Psoas muscle (tissue), 8 donors: ENCODE measurements at regions of chr6 and their contacts with region 1.

Region 1: GRCh38 chr6:7245668-7246393 is 67.2 kb downstream of the SSR1 start:
- DNase-seq: no peak
- ATAC-seq: no peak
- H3K4me3 ChIP-seq: no peak overlapping the region
- H3K27ac ChIP-seq: no peak overlapping the region
- H3K4me1 ChIP-seq: peaks cover 16% of the 10 kb centered on the region
- H3K27me3 ChIP-seq: no peaks in the 10 kb centered on the region
- CTCF ChIP-seq: no peak

Region 2: GRCh38 chr6:6724539-6725467 is 521.0 kb before region 1 on chr6:
- intact Hi-C with region 1: loop called (anchors 2 to 5 kb)
- DNase-seq: peak; percentile 70 to 84
- ATAC-seq: peak; percentile 91 to 96 (median 92)
- H3K4me3 ChIP-seq: peak overlapping the region; percentile 62
- H3K27ac ChIP-seq: peak overlapping the region; percentile 88
- H3K4me1 ChIP-seq: peaks cover 15% of the 10 kb centered on the region
- H3K27me3 ChIP-seq: no peaks in the 10 kb centered on the region
- CTCF ChIP-seq: peak; percentile 73

Region 3: GRCh38 chr6:7137335-7138045 is 108.3 kb before region 1 on chr6:
- intact Hi-C with region 1: no loop called
- DNase-seq: peak; percentile 59 to 76
- ATAC-seq: peak; percentile 39 to 55 (median 48)
- H3K4me3 ChIP-seq: peak overlapping the region; percentile 50
- H3K27ac ChIP-seq: peak overlapping the region; percentile 99
- H3K4me1 ChIP-seq: peaks cover 86% of the 10 kb centered on the region
- H3K27me3 ChIP-seq: no peaks in the 10 kb centered on the region
- CTCF ChIP-seq: no peak

Region 4: DNA sequence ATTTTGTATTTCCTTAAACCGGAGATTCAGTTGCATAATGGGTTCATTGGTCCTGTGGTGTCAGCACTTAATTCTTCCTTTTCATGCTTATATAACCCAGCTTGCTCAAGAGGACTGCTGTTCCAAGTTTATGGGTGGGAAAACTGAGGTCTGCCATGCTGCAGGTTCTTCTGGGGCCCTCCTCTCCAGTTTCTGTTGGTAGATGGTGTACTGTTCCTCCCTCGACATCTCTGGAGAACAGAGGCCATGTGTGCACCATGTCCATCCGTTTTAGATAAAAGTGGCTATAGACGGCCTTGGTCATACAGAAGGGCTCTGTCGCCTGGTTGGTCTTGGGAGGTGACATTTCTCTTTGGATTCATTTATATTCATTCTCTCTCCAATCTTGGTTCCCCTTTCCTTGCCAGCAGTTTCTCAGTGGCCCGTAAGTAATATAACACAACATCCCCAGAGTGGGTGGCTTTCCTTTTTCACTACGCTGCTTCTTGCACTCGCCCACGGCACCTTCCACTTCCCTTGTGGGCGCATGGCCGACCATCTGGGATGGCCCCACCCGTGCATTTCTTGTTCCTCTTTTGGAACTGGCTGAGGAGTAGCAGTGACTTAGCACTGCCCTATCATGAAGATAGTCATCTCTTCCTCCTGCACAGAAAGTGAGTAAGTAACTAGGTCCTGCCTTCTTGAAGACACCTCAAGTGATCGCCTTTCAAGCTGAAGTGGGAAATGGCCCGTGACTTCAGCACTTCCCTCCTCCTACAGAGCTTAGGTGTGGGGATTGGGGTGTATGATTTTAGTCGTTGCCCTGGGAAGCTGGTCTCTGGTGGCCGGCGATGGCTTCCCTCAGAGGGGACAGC is 43.9 kb before region 1 on chr6:
- intact Hi-C with region 1: no loop called
- DNase-seq: peak; percentile 37 to 64
- ATAC-seq: peak in 3 of 4 donors; percentile 35 to 41 (median 37)
- H3K4me3 ChIP-seq: no peak overlapping the region
- H3K27ac ChIP-seq: no peak overlapping the region
- H3K4me1 ChIP-seq: peaks cover 13% of the 10 kb centered on the region
- H3K27me3 ChIP-seq: no peaks in the 10 kb centered on the region
- CTCF ChIP-seq: no peak